Dorsolateral prefrontal cortex (tissue), 120 donors: ENCODE measurements at regions of chr7 and their contacts with region 1.

Region 1: GRCh38 chr7:104923010-104923421 is 91.0 kb upstream of the KMT2E start:
- DNase-seq: peak in 9 of 10 donors; percentile 7 to 72 (median 50)
- H3K4me3 ChIP-seq: no peak overlapping the region
- H3K27ac ChIP-seq: peak overlapping the region in 46 of 59 donors; percentile 2 to 77 (median 56)
- H3K27me3 ChIP-seq: no peaks in the 10 kb centered on the region
- CTCF ChIP-seq: peak; percentile 30 to 84 (median 67)

Region 2: GRCh38 chr7:104231054-104232046 is 691.7 kb before region 1 on chr7:
- intact Hi-C with region 1: loop called in 1 of 2 experiments (anchors 5 kb)
- DNase-seq: peak in 9 of 10 donors; percentile 31 to 60 (median 53)
- H3K4me3 ChIP-seq: peak overlapping the region in 29 of 59 donors; percentile 0 to 47 (median 19)
- H3K27ac ChIP-seq: no peak overlapping the region
- H3K27me3 ChIP-seq: no peaks in the 10 kb centered on the region
- CTCF ChIP-seq: peak; percentile 67 to 93 (median 82)

Region 3: DNA sequence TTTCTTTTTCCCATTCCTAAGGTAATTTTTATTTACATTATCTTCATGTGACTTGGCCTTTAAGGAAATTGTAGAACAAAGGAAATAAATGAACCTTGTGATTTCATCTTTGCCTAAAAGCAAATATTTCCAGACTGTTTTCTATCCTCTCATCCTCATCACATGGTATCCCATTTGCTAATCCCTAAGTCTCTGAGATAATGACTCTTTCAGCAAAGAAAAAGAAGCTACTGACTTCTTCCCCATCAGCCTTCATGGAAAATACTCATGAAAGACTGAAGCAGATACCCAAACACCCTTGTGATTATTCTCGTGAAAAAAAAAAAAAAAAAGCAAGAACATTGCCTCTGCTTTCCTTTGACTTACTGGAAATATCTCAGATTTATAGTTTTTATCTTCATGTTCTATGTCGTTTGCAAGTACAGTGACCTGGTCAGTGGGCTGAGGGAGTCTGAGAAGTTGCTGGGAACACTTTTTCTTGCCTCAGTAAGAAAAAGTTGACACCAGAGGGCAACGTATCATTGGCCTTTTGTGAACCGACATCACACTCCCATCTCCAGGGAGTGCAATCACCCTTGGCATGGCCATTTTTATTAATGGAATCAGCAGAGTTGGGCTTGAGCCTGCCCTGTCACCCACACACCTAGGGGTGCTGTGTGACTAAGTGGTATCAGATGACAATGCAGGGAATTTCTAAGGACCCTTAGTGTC is 155.0 kb before region 1 on chr7:
- intact Hi-C with region 1: loop called in 1 of 2 experiments (anchors 5 kb)
- DNase-seq: peak in 1 of 10 donors; percentile 36
- H3K4me3 ChIP-seq: no peak overlapping the region
- H3K27ac ChIP-seq: peak overlapping the region in 2 of 59 donors; percentile 4 to 13
- H3K27me3 ChIP-seq: peaks cover 0 to 5% (median 0%) of the 10 kb centered on the region in 45 donors
- CTCF ChIP-seq: peak in 52 of 56 donors; percentile 17 to 73 (median 48)

Region 4: GRCh38 chr7:104883718-104884452 is 39.1 kb before region 1 on chr7:
- intact Hi-C with region 1: loop called in 1 of 2 experiments (anchors 5 kb)
- DNase-seq: peak; percentile 59 to 85 (median 78)
- H3K4me3 ChIP-seq: peak overlapping the region in 11 of 59 donors; percentile 5 to 38 (median 12)
- H3K27ac ChIP-seq: peak overlapping the region in 41 of 59 donors; percentile 1 to 72 (median 44)
- H3K27me3 ChIP-seq: no peaks in the 10 kb centered on the region
- CTCF ChIP-seq: peak; percentile 31 to 93 (median 87)

Region 5: DNA sequence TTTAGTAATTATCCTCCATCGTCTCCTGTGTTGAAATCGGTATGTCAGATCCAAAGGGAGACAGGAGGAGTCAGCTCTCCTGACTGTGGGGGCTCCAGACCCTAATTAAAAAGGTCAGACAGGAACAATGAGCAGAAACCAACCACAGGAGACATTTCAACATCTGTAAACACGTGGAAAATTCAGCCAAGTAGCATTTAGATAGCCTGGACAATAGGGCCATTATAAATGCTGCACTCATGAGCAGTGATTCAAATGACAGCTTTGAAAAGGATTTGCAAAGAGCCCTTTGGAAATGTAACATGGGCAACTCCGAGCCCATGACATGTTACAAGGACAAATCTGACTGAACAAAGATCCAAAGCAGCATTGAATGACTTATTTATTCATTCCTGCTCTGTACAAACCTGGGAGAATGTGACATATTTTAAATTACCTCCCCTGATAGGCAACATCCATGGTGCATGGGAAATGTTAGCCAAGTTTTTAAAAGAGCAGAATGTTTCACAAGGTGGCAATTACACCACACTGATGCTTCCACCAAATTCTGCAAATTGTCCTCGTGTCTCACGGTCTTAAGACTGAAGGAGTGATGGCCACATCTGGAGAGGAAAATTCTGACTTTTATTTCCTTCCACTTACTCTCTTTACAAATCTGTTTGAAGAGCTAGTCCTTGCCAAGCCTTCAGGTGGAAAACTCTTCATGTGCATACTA is 22.3 kb before region 1 on chr7:
- intact Hi-C with region 1: loop called in 1 of 2 experiments (anchors 2 kb)
- DNase-seq: no peak
- H3K4me3 ChIP-seq: peak overlapping the region in 7 of 59 donors; percentile 4 to 43 (median 14)
- H3K27ac ChIP-seq: peak overlapping the region in 58 of 59 donors; percentile 23 to 97 (median 90)
- H3K27me3 ChIP-seq: no peaks in the 10 kb centered on the region
- CTCF ChIP-seq: peak in 5 of 56 donors; percentile 5 to 20 (median 7)

Region 6: DNA sequence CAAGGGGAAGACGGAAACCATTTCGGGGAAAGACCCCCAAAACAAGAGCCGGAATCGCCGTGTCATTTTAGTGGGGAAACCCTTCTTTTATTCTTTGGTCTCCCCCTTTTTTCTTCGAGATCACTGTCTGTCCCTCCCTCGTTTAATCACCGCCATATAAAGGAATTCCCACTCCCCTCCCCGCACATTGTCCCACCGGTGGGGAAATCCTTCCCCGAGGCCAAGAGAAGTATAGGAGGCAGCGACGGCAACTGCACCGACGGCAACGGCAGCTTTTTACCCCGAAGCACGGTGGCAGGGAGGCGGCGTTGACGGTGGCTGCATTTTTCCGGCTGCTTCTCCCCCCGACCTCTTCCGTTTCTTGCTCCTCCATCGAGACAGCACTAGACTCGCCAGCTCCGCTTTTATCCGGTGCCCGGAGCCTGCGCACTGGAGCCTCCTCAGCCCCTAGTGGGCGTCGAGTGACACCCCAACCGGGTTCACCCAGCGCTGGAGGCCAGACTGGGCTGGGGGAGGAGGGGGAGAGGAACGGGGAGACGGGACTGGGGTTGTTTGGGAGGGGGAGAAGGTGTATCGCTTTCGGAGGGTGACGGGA is 90.3 kb after region 1 on chr7:
- intact Hi-C with region 1: no loop called
- DNase-seq: peak; percentile 93 to 98 (median 96)
- H3K4me3 ChIP-seq: peak overlapping the region; percentile 69 to 99 (median 92)
- H3K27ac ChIP-seq: peak overlapping the region; percentile 99 to 100 (median 100)
- H3K27me3 ChIP-seq: no peaks in the 10 kb centered on the region
- CTCF ChIP-seq: peak in 42 of 56 donors; percentile 4 to 54 (median 31)

Region 7: GRCh38 chr7:105487579-105488571 is 564.9 kb after region 1 on chr7:
- intact Hi-C with region 1: loop called in 1 of 2 experiments (anchors 10 kb)
- DNase-seq: no peak
- H3K4me3 ChIP-seq: no peak overlapping the region
- H3K27ac ChIP-seq: peak overlapping the region in 18 of 59 donors; percentile 7 to 69 (median 30)
- H3K27me3 ChIP-seq: no peaks in the 10 kb centered on the region
- CTCF ChIP-seq: peak in 54 of 56 donors; percentile 34 to 79 (median 59)

Region 8: DNA sequence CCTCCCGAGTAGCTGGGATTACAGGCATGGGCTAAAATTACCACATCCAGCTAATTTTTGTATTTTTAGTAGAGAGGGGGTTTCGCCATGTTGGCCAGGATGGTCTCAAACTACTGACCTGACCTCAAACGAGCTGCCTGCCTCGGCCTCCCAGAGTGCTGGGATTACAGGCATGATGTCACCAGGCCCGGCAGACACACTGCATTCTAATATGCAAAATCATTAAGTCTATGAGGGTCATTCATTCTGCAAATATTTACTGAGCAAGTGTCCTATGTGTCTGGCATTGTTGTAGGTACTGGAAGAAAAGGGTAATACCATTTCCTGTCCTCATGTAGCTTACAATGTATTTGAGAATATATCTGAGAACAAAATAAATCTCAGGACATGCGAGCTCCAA is 596.3 kb after region 1 on chr7:
- intact Hi-C with region 1: no loop called
- DNase-seq: no peak
- H3K4me3 ChIP-seq: no peak overlapping the region
- H3K27ac ChIP-seq: no peak overlapping the region
- H3K27me3 ChIP-seq: no peaks in the 10 kb centered on the region
- CTCF ChIP-seq: no peak